A549 (cell line): ENCODE measurements at regions of chr12 and their contacts with region 1.

Region 1: DNA sequence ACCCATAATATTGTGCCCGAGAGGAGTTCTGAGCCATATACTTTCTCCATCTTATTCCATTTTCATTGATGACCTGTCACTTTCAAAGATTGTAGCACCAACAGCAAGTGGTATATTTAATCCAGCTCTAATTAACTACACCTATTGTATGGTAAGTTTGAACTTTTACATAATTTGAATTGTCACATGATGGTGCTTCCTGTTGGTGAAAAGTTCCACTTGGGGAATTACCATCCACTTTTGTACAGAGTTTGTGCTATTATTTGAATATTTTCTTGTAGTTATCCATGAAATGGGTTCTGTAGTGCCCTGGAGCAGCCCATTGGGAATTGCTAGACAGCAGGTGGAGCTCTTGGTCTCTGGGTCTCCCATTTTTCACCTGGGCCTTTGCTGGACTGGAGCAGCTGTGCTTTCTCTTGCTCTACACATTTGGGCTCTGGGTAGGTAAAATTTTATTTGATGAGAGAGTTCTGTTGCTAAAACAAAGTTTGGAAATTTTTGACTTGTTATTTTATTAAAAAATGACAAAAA is 3.0 kb downstream of the SMCO3 start:
- DNase-seq: peak; percentile 38 to 58
- ATAC-seq: peak; percentile 95 to 97
- H3K4me3 ChIP-seq: no peak overlapping the region
- H3K27ac ChIP-seq: no peak overlapping the region
- H3K4me1 ChIP-seq: peaks cover 14% of the 10 kb centered on the region; the same call in 1 of the 3 replicates
- CTCF ChIP-seq: peak; percentile 89
- EP300 ChIP-seq: no peak
- POLR2A ChIP-seq: no peak
- RAD21 ChIP-seq: peak; percentile 94 to 95

Region 2: GRCh38 chr12:14828896-14829295 is 17.9 kb after region 1 on chr12:
- CTCF ChIA-PET with region 1: interaction called, 36 read pairs
- POLR2A ChIA-PET with region 1: no interaction called
- DNase-seq: peak in 1 of 2 experiments; percentile 45
- ATAC-seq: peak in 1 of 2 experiments; percentile 75; a peak in 3 of 6 replicates
- H3K4me3 ChIP-seq: no peak overlapping the region
- H3K27ac ChIP-seq: no peak overlapping the region
- H3K4me1 ChIP-seq: peaks cover 17% of the 10 kb centered on the region
- CTCF ChIP-seq: no peak
- EP300 ChIP-seq: no peak
- POLR2A ChIP-seq: no peak
- RAD21 ChIP-seq: no peak

Region 3: DNA sequence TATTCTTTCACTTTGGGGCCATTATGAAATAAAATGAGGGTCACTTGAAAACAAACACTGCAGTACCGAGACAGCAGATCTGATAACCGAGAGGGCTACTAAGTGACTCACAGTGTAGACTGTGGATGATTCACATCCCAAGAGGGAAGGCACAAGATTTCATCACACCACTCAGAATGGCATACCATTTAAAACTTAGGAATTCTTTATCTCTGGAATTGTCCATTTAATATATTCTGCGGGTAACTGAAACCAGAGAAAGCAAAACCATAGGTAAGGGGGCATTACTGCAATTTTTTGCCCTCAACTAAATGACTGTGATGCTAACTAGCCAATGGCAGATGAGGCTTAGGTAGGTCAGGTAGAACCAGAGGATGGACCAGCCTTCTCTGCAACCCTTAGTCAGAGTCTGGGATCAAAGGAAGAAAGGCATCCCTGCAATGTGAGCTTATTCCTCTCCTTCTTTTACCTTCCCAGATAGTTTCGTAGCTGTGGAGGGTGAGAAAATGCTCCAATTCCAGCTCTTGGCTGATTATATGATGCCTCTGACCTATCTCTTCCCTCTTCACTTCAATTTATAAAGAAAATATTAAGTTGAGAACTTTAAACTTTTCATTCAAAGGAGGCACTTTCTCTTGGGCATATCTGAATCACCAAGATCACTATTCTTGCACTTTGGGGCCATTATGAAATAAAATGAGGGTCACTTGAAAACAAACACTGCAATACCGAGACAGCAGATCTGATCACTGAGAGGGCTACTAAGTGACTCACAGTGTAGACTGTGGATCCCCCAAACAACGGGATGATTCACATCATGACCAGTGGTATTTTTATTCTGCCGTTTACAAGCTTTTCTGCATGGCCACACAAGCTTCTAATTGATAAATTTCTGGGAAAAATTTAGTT is 25.5 kb after region 1 on chr12:
- CTCF ChIA-PET with region 1: interaction called, 22 read pairs
- POLR2A ChIA-PET with region 1: interaction called, 4 read pairs
- DNase-seq: peak; percentile 50 to 86
- ATAC-seq: peak; percentile 96 to 98
- H3K4me3 ChIP-seq: peak overlapping the region; percentile 17; the same call in 2 of the 3 replicates
- H3K27ac ChIP-seq: peak overlapping the region; percentile 80 to 90
- H3K4me1 ChIP-seq: peaks cover 59% of the 10 kb centered on the region
- CTCF ChIP-seq: no peak
- EP300 ChIP-seq: peak; percentile 57 to 73; a peak in 3 of 5 replicates
- POLR2A ChIP-seq: no peak
- RAD21 ChIP-seq: peak in 1 of 2 experiments; percentile 20; a peak in 3 of 5 replicates

Region 4: GRCh38 chr12:14845350-14845750 is 34.3 kb after region 1 on chr12:
- CTCF ChIA-PET with region 1: interaction called, 15 read pairs
- POLR2A ChIA-PET with region 1: no interaction called
- DNase-seq: peak; percentile 58 to 64
- ATAC-seq: peak; percentile 81 to 83; a peak in 5 of 6 replicates
- H3K4me3 ChIP-seq: no peak overlapping the region
- H3K27ac ChIP-seq: peak overlapping the region in 1 of 2 experiments; percentile 52; a peak in 3 of 6 replicates
- H3K4me1 ChIP-seq: peaks cover 44% of the 10 kb centered on the region
- CTCF ChIP-seq: peak; percentile 73
- EP300 ChIP-seq: no peak
- POLR2A ChIP-seq: no peak
- RAD21 ChIP-seq: peak; percentile 88 to 92